PC-3 (cell line): ENCODE measurements at regions of chrX and their contacts with region 1.

Region 1: GRCh38 chrX:10602626-10603025 is 17.8 kb downstream of the MID1 start:
- DNase-seq: peak; percentile 62
- ATAC-seq: peak; percentile 84
- H3K4me3 ChIP-seq: no peak overlapping the region
- H3K27ac ChIP-seq: no peak overlapping the region
- H3K4me1 ChIP-seq: peaks cover 28% of the 10 kb centered on the region
- H3K27me3 ChIP-seq: no peaks in the 10 kb centered on the region
- CTCF ChIP-seq: no peak

Region 2: DNA sequence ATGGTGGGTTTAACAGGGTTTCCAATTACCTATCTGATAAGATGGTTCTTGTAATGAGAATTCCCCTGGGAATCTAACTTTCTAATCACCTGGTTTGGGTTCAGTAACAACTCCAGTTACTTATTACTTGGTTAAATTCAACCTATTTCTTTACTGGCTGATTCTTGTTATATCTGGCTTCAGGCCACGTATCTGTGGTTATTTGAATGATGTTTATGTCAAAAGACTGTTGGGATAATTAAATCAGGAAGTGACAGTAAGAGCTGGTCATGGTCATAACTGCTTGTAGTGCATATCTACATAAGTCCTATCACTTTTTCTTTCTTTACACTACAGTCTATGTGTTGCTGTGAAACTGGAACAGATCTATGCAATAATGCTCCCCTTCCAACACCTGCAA is 90.4 kb before region 1 on chrX:
- CTCF ChIA-PET with region 1: no interaction called
- POLR2A ChIA-PET with region 1: no interaction called
- intact Hi-C with region 1: loop called (anchors 5 kb)
- DNase-seq: peak; percentile 61
- ATAC-seq: peak; percentile 79
- H3K4me3 ChIP-seq: 0 out of 2 replicates have a peak overlapping the region, but pooled peaks have one; percentile 32
- H3K27ac ChIP-seq: peak overlapping the region; percentile 78
- H3K4me1 ChIP-seq: peaks cover 19% of the 10 kb centered on the region
- H3K27me3 ChIP-seq: no peaks in the 10 kb centered on the region
- CTCF ChIP-seq: no peak

Region 3: GRCh38 chrX:10667143-10667542 is 64.5 kb after region 1 on chrX:
- CTCF ChIA-PET with region 1: no interaction called
- POLR2A ChIA-PET with region 1: no interaction called
- intact Hi-C with region 1: no loop called
- DNase-seq: no peak
- ATAC-seq: no peak
- H3K4me3 ChIP-seq: no peak overlapping the region
- H3K27ac ChIP-seq: no peak overlapping the region
- H3K4me1 ChIP-seq: no peaks in the 10 kb centered on the region
- H3K27me3 ChIP-seq: no peaks in the 10 kb centered on the region
- CTCF ChIP-seq: no peak